Upper lobe of right lung (tissue), 1 donor: ENCODE measurements at regions of chr14 and their contacts with region 1.

Region 1: DNA sequence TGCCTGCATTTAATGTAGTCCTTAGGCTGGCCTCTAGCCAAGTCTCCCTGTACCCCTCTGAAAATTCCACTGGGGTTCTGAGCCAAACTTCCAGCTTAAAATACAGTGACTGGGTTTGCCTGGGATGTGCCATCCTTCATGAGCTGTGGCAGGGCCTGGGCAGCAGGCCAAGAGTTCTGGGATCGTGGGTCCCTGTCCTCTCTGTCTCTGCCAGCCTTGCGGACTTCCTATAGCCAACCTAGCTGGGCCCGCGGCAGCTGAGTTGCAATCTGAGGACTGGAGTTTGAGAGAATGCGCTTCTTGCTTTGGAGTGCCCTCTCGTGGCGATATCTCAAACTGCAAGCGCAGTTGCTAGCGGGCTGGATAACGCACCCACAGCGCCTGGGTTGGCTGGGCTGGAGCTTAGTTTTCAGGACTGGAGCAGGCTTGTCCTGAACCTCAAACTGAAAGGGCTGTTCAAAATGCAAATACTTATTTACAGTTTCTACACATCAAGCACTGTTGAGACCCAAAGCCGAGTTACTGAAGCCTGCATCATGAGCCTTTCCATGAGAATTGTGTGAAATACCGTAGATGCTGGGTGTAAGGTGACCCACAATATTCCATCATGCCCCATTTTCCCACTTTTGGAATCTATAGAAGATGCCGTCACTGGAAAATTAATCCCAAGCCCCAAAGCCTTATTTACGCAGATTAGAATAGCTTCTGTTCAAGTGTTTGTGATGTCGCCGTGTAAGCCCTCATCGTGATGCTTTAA is 7.3 kb upstream of the IFI27L2 start:
- DNase-seq: peak; percentile 92
- ATAC-seq: peak; percentile 97
- H3K4me3 ChIP-seq: no peak overlapping the region
- H3K27ac ChIP-seq: no peak overlapping the region
- H3K4me1 ChIP-seq: no peaks in the 10 kb centered on the region
- H3K27me3 ChIP-seq: no peaks in the 10 kb centered on the region
- CTCF ChIP-seq: peak; percentile 99

Region 2: GRCh38 chr14:93959239-93960107 is 177.3 kb before region 1 on chr14:
- intact Hi-C with region 1: no loop called
- DNase-seq: peak; percentile 78
- ATAC-seq: peak; percentile 71
- H3K4me3 ChIP-seq: no peak overlapping the region
- H3K27ac ChIP-seq: peak overlapping the region; percentile 24
- H3K4me1 ChIP-seq: peaks cover 30% of the 10 kb centered on the region
- H3K27me3 ChIP-seq: no peaks in the 10 kb centered on the region
- CTCF ChIP-seq: no peak

Region 3: GRCh38 chr14:94041551-94042346 is 95.0 kb before region 1 on chr14:
- intact Hi-C with region 1: loop called (anchors 5 kb)
- DNase-seq: peak; percentile 77
- ATAC-seq: peak; percentile 87
- H3K4me3 ChIP-seq: no peak overlapping the region
- H3K27ac ChIP-seq: no peak overlapping the region
- H3K4me1 ChIP-seq: peaks cover 13% of the 10 kb centered on the region
- H3K27me3 ChIP-seq: no peaks in the 10 kb centered on the region
- CTCF ChIP-seq: no peak